CD8-positive, alpha-beta T cell (primary cell): ENCODE measurements at regions of chr9 and their contacts with region 1.

Region 1: DNA sequence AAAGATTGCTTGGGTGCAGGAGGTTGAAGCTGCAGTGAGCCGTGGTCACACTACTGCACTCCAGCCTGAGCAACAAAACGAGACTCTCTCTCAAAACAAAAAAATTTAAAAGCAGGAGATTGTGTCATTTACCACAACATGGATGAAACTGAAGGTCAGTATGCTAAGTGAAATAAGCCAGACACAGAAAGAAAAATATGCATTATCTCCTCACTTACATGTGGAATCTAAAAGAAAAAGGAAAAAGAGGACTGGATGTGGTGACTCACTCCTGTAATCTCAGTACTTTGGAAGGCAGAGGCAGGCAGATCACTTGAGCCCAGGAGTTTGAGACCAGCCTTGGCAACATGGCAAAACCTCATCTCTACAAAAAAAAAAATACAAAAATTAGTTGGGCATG is 146.8 kb upstream of the DAPK1 start:
- DNase-seq: no peak
- ATAC-seq: no peak
- H3K4me3 ChIP-seq: no peak overlapping the region
- H3K4me3 Mint-ChIP-seq: no peak overlapping the region
- H3K27ac ChIP-seq: no peak overlapping the region
- H3K27ac Mint-ChIP-seq: no peak overlapping the region
- H3K4me1 ChIP-seq: no peaks in the 10 kb centered on the region
- H3K4me1 Mint-ChIP-seq: no peaks in the 10 kb centered on the region
- H3K27me3 ChIP-seq: no peaks in the 10 kb centered on the region
- H3K27me3 Mint-ChIP-seq: peaks cover 7% of the 10 kb centered on the region
- CTCF ChIP-seq: no peak

Region 2: DNA sequence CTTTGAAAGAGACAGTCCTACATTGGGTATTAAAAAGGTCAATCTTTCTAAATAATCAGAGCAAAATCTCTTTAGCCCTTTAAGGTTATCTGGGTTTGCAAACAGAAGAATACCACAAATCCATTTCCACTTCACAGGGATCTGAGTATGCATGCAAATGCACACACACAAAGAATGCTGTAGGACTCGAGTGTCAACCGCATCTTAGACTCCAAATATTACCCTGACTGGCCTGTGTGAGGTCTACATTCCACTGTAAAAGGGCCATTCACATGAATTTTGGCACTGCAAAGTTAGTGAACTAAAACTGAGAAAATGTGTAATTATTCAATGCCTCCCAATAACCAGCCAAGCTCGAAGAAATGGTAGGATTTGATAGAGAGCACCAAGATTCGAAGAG is 1809.1 kb before region 1 on chr9:
- CTCF ChIA-PET with region 1: no interaction called
- POLR2A ChIA-PET with region 1: no interaction called
- intact Hi-C with region 1: loop called in 1 of 2 experiments (anchors 5 kb)
- DNase-seq: no peak
- ATAC-seq: no peak
- H3K4me3 ChIP-seq: no peak overlapping the region
- H3K4me3 Mint-ChIP-seq: no peak overlapping the region
- H3K27ac ChIP-seq: no peak overlapping the region
- H3K27ac Mint-ChIP-seq: no peak overlapping the region
- H3K4me1 ChIP-seq: no peaks in the 10 kb centered on the region
- H3K4me1 Mint-ChIP-seq: no peaks in the 10 kb centered on the region
- H3K27me3 ChIP-seq: no peaks in the 10 kb centered on the region
- H3K27me3 Mint-ChIP-seq: no peaks in the 10 kb centered on the region
- CTCF ChIP-seq: no peak